A673 (cell line): ENCODE measurements at regions of chr2 and their contacts with region 1.

Region 1: GRCh38 chr2:209334198-209335017 is 89.4 kb upstream of the MAP2 start:
- DNase-seq: peak; percentile 80
- H3K4me3 ChIP-seq: no peak overlapping the region
- H3K27ac ChIP-seq: no peak overlapping the region
- H3K4me1 ChIP-seq: no peaks in the 10 kb centered on the region
- H3K27me3 ChIP-seq: peaks cover 21% of the 10 kb centered on the region
- CTCF ChIP-seq: peak; percentile 88

Region 2: DNA sequence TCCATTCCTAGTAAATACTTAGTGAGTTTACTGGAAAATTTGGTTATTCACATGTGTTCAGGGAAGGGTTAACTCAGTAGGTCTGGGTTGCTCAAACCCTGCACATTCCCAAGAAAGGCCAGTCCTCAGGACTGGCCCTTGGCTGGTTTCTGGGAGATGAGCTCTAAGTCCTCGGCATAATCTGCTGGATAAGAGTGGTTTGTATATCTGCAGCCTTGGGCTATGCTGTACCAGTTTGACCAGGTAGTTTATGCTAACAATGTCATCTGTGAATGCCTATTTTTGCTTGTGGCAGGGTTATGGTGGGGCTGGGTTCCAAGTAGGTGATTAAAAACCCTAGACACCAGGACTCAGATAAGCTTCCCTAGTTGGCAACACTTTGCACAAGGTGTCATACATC is 935.2 kb before region 1 on chr2:
- CTCF ChIA-PET with region 1: no interaction called
- POLR2A ChIA-PET with region 1: no interaction called
- intact Hi-C with region 1: loop called (anchors 5 kb)
- DNase-seq: no peak
- H3K4me3 ChIP-seq: no peak overlapping the region
- H3K27ac ChIP-seq: no peak overlapping the region
- H3K4me1 ChIP-seq: no peaks in the 10 kb centered on the region
- H3K27me3 ChIP-seq: peaks cover 57% of the 10 kb centered on the region
- CTCF ChIP-seq: no peak

Region 3: DNA sequence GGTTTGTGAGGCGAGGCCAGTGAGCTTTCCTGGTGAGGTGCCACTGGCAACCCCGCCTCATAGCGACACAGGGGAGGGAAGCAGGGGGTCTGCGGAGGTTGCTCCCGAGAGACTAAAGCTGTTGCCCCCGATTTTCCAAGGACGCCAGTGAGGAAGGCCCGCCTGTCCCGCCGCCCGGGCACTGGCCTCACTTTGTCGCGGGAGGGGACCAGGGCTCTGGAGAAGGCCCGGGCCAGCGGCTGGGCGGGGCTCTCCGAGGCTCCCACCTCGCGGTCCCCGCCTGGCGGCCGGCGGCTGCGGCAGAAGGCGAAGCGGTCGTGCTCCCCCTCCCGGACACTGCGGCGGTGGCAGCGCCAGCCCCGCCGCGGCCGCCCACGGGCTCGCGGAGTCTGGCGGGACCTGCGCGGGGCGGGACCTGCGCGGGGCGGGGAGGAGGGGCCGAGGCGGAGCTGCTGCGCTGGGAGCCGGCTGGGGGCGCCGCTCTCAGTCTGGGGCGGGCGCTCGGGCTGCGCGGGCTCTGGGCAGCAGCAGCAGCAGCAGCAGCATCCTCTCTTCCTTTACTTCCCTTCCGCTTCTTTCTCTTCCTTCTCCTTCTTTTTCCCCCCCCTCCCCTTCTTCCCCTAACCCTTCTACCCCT is 89.3 kb after region 1 on chr2 and contains the start of gene MAP2:
- CTCF ChIA-PET with region 1: interaction called, 3 read pairs
- POLR2A ChIA-PET with region 1: no interaction called
- intact Hi-C with region 1: loop called (anchors 2 kb)
- DNase-seq: peak; percentile 89
- H3K4me3 ChIP-seq: peak within 1 kb of the TSS; percentile 54
- H3K27ac ChIP-seq: no peak within 1 kb of the TSS
- H3K4me1 ChIP-seq: peaks cover 14% of the 10 kb centered on the region
- H3K27me3 ChIP-seq: no peaks in the 10 kb centered on the region
- CTCF ChIP-seq: peak; percentile 59
- total RNA-seq, gene MAP2: 1.7 and 2.0 TPM in 2 replicates

Region 4: DNA sequence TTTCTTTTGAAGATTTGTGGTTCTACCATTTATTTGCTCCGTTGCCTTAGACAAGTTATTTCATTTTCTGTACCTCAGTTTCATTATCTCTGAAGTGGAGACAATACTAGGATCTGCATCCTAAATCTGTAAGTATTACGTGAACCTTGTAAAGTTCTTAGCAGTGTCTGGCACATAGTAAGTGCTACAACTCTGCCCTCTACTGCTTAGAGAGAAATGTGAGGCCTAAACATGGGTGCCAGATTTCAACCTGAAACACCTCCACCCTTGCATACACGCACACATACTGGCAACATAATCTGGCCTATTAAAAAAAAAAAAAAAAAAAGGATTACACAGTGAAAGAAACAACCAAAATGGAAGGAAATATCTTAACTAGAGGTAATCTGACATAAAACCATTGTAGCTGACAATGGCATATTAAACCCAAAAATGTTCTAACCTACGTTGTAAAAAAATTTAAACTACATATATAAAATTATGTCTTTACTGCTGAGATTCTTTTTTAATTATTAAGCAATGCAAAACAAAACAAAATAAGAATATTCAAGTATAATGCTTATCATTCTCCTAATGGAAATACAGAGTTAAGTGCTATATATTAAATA is 222.1 kb after region 1 on chr2:
- CTCF ChIA-PET with region 1: no interaction called
- POLR2A ChIA-PET with region 1: no interaction called
- intact Hi-C with region 1: loop called (anchors 1 kb)
- DNase-seq: peak; percentile 59
- H3K4me3 ChIP-seq: no peak overlapping the region
- H3K27ac ChIP-seq: no peak overlapping the region
- H3K4me1 ChIP-seq: no peaks in the 10 kb centered on the region
- H3K27me3 ChIP-seq: no peaks in the 10 kb centered on the region
- CTCF ChIP-seq: peak; percentile 73

Region 5: DNA sequence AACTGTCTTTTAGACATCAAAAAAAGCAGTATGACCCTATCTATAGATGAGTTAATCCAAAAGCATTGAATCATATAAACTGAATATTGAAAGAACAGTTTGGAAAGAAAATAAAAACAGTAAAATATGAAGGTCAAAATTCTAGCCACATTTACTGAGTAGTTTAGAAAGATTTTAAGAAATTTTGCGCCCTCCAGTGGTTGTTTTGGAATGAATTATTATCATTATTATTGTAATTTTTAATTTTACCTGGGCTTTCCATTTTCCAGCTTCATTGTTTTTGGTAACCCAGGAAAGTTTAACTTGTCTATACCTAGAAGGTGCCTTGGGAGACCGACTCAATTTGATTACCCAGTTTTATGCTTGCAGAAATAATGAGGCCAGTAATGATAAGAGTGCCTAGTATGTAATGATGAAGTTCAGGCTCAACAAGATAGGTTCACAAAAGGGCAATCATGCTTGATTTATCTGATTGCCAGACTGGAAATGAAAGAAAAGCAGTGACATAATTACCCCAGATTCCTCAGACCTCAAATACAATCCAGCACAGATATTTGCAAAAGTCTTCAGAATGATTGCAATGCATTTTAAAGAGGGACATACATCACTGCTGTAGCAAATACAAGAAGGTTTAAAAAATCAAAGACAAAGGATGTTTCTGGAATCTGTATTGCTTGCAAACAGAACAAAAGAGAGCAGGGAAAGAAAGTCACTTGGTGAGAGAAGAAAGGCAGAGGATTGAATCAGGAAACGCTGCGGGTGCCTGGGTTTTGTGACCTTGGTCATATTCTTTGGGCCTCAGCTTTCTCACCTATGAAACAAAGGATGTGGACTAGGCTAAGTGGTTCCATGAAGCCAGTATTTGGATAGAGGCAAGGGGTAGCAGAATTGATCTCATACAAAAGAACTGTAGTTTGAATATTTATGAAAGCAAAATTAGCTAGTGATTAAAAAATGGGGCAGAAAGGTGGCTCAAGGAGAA is 243.3 kb after region 1 on chr2:
- CTCF ChIA-PET with region 1: interaction called, 3 read pairs
- POLR2A ChIA-PET with region 1: interaction called, 3 read pairs
- intact Hi-C with region 1: loop called (anchors 1 kb)
- DNase-seq: peak; percentile 34
- H3K4me3 ChIP-seq: no peak overlapping the region
- H3K27ac ChIP-seq: no peak overlapping the region
- H3K4me1 ChIP-seq: no peaks in the 10 kb centered on the region
- H3K27me3 ChIP-seq: no peaks in the 10 kb centered on the region
- CTCF ChIP-seq: peak; percentile 67

Region 6: GRCh38 chr2:209960676-209961630 is 626.5 kb after region 1 on chr2:
- CTCF ChIA-PET with region 1: no interaction called
- POLR2A ChIA-PET with region 1: no interaction called
- intact Hi-C with region 1: loop called (anchors 5 kb)
- DNase-seq: peak; percentile 91
- H3K4me3 ChIP-seq: no peak overlapping the region
- H3K27ac ChIP-seq: peak overlapping the region; percentile 55
- H3K4me1 ChIP-seq: peaks cover 48% of the 10 kb centered on the region
- H3K27me3 ChIP-seq: no peaks in the 10 kb centered on the region
- CTCF ChIP-seq: peak; percentile 80